MCF 10A (cell line): ENCODE measurements at regions of chr6 and their contacts with region 1.

Region 1: DNA sequence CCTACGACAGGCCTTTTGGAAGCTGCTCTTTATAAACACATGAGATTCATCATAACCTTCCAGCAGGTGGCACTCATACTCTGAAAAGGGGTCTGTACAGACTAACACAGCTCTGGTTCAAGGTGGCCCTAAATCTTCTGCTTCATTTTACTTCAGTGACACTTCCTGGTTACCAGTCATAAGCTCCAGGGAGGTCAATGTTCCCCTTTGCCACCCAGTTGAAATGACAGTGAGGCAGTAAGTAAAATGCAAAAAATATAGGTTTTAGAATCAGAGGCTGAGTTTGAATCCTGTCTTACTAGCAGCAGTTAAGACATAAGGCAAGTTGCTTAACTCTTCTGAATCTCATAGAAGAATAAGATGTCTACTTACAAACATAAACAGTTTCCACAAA is 132.8 kb downstream of the CDK19 start:
- DNase-seq: peak; percentile 87
- H3K4me3 Mint-ChIP-seq: no peak overlapping the region
- H3K27ac Mint-ChIP-seq: no peak overlapping the region
- H3K4me1 Mint-ChIP-seq: no peaks in the 10 kb centered on the region
- H3K27me3 Mint-ChIP-seq: no peaks in the 10 kb centered on the region
- CTCF ChIP-seq: peak; percentile 74

Region 2: DNA sequence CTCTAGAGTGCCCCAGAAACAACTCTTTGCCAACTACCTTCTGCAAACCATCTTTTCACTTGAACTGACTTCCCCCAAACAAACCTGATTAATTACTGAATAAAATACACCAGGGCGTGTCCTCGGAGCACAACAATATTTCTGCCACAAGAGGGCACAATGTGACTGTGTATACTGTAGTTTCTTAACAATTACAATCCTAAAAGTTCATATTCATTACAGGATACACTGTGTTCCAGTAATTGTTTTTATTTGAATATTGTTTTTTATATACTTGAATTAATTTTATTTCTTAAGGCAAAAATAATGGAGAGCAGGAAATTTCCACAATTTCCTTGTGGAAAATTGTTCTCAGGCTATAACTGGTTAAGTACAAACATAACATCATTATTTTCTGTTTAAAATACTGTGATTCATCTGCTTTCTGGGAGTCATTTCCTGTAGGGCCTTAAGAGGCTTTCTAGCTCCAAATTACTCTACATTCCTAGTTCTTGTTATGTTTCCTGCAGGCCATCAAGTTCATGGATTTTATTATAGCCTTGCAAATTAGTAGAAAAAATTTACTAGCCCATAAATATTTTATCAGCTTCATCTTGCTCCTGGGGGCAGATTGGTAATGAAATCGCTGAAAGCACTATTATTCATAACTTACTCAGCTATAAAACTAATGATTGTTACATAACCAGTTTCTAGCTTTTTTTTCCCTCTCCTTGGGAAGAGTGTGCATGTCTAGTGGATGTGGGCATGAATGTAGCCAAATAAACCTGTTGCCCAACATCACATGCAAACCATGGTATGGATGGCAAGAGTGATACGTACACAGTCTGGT is 154.1 kb before region 1 on chr6:
- CTCF ChIA-PET with region 1: interaction called, 6 read pairs
- POLR2A ChIA-PET with region 1: interaction called, 3 read pairs
- intact Hi-C with region 1: loop called (anchors 1 kb)
- DNase-seq: peak; percentile 76
- H3K4me3 Mint-ChIP-seq: no peak overlapping the region
- H3K27ac Mint-ChIP-seq: peak overlapping the region; percentile 66
- H3K4me1 Mint-ChIP-seq: peaks cover 21% of the 10 kb centered on the region
- H3K27me3 Mint-ChIP-seq: no peaks in the 10 kb centered on the region
- CTCF ChIP-seq: peak; percentile 76

Region 3: GRCh38 chr6:110882271-110882613 is 199.8 kb after region 1 on chr6:
- CTCF ChIA-PET with region 1: interaction called, 53 read pairs
- POLR2A ChIA-PET with region 1: interaction called, 28 read pairs
- intact Hi-C with region 1: loop called (anchors 1 kb)
- DNase-seq: no peak
- H3K4me3 Mint-ChIP-seq: no peak overlapping the region
- H3K27ac Mint-ChIP-seq: no peak overlapping the region
- H3K4me1 Mint-ChIP-seq: peaks cover 46% of the 10 kb centered on the region
- H3K27me3 Mint-ChIP-seq: no peaks in the 10 kb centered on the region
- CTCF ChIP-seq: no peak

Region 4: GRCh38 chr6:110944681-110945151 is 262.3 kb after region 1 on chr6:
- CTCF ChIA-PET with region 1: interaction called, 123 read pairs
- POLR2A ChIA-PET with region 1: interaction called, 5 read pairs
- intact Hi-C with region 1: loop called (anchors 1 kb)
- DNase-seq: peak; percentile 87
- H3K4me3 Mint-ChIP-seq: no peak overlapping the region
- H3K27ac Mint-ChIP-seq: peak overlapping the region; percentile 89
- H3K4me1 Mint-ChIP-seq: peaks cover 6% of the 10 kb centered on the region
- H3K27me3 Mint-ChIP-seq: no peaks in the 10 kb centered on the region
- CTCF ChIP-seq: no peak

Region 5: DNA sequence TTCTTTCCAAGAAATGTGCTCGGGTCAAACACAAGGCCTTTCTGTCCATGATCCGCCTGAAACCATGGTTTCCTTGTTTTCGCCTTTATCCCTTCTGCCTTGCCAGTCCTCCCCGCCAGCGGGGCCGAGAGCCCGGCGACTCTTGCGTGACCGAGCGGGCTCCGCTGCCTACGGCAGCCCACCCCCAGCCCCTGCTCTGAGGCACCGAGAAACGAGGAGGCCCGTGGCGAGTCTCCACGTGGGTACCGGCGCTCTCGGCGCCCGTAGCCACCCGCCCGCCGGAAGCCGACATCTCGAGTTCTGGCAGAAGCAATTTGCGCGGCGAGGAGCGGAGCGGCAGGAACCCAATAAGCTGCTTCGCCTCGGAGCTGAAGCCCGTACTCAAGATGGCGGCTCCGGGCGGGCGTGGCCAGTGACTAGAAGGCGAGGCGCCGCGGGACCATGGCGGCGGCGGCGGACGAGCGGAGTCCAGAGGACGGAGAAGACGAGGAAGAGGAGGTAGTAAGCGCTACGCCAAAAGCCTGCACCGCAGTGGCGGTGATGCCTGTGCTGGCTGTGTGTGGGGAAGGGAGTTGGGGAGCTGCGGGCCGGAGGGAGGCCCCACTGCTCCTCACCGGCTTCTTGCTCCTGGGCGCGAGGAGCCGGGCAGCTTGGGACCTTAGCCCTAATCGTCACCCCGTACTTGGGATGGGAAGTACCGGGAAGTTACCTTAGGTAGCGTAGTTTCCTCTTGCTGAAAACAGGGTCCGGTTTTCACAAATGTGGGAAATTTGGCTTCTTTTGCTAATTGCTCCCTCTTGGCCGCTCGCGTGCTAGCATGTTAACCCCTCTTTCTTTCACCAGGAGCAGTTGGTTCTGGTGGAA is 276.1 kb after region 1 on chr6 and contains the start of gene GTF3C6:
- CTCF ChIA-PET with region 1: interaction called, 12 read pairs
- POLR2A ChIA-PET with region 1: interaction called, 4 read pairs
- intact Hi-C with region 1: no loop called
- DNase-seq: peak; percentile 92
- H3K4me3 Mint-ChIP-seq: peak within 1 kb of the TSS; percentile 99
- H3K27ac Mint-ChIP-seq: peak within 1 kb of the TSS; percentile 100
- H3K4me1 Mint-ChIP-seq: no peaks in the 10 kb centered on the region
- H3K27me3 Mint-ChIP-seq: no peaks in the 10 kb centered on the region
- CTCF ChIP-seq: no peak
- total RNA-seq, gene GTF3C6: 96.8 and 96.9 TPM in 2 replicates